Colonic mucosa (tissue), 4 donors: ENCODE measurements at regions of chr7 and their contacts with region 1.

Region 1: DNA sequence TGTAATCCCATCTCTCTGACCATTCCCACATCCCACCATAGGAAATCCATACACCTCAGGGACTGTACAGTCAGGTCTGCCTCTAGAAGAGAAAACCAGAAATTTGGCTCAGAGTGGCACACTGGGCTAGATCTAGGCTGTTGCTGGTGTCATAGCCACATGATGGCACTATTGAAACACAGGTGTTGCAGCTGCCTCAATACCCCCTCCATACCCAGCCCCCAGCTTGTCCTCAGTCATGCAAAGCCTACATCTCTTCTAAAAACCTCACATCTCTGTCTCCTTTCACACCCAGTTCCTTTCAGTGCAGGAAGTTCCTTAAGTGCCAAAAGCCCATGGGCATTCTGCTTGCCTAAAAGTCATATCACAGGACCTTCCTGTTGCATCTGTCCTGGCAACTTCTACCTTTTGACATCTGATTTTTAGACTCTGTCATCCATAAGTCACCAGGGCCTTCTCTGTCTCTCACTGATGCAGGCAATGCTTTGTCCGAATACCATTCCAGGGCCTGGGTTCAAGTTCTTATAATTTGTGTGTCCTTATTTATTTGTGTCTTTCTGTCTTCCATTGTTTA is 27.0 kb upstream of the HIBADH start:
- DNase-seq: peak; percentile 25
- H3K4me3 ChIP-seq: no peak overlapping the region
- H3K27ac ChIP-seq: no peak overlapping the region
- H3K4me1 ChIP-seq: no peaks in the 10 kb centered on the region
- H3K27me3 ChIP-seq: no peaks in the 10 kb centered on the region
- CTCF ChIP-seq: peak; percentile 32

Region 2: DNA sequence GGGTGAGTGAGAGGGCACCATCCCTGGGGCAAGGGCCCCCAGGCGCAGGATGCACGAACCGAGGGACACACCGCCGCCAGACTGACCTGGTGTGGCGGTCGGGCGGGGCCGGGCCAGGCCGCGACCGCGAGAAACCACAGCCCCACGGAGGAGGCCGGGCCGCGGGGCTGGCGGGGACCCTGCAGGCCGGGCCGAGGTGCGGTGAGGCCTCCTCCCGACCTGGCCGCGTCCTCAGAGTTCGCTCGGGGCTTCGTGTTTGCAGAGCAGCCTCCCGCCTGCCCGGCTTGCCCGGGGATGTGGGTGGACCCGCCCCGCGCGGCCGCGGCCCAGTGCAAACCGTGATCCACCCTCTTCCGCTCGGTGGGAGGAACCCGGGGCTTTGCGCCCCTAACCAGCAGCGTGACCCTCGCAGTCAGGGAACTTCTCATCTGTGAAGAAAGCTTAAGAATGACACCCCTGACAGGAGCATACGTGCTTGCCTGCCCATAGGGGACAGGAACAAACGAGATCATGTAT is 469.2 kb before region 1 on chr7:
- intact Hi-C with region 1: no loop called
- DNase-seq: no peak
- H3K4me3 ChIP-seq: no peak overlapping the region
- H3K27ac ChIP-seq: no peak overlapping the region
- H3K4me1 ChIP-seq: no peaks in the 10 kb centered on the region
- H3K27me3 ChIP-seq: peaks cover 14% of the 10 kb centered on the region
- CTCF ChIP-seq: no peak

Region 3: GRCh38 chr7:27459021-27459730 is 230.5 kb before region 1 on chr7:
- intact Hi-C with region 1: no loop called
- DNase-seq: no peak
- H3K4me3 ChIP-seq: no peak overlapping the region
- H3K27ac ChIP-seq: no peak overlapping the region
- H3K4me1 ChIP-seq: no peaks in the 10 kb centered on the region
- H3K27me3 ChIP-seq: no peaks in the 10 kb centered on the region
- CTCF ChIP-seq: no peak

Region 4: GRCh38 chr7:27774717-27775328 is 85.1 kb after region 1 on chr7:
- intact Hi-C with region 1: loop called (anchors 10 kb)
- DNase-seq: no peak
- H3K4me3 ChIP-seq: no peak overlapping the region
- H3K27ac ChIP-seq: no peak overlapping the region
- H3K4me1 ChIP-seq: no peaks in the 10 kb centered on the region
- H3K27me3 ChIP-seq: no peaks in the 10 kb centered on the region
- CTCF ChIP-seq: peak; percentile 52

Region 5: DNA sequence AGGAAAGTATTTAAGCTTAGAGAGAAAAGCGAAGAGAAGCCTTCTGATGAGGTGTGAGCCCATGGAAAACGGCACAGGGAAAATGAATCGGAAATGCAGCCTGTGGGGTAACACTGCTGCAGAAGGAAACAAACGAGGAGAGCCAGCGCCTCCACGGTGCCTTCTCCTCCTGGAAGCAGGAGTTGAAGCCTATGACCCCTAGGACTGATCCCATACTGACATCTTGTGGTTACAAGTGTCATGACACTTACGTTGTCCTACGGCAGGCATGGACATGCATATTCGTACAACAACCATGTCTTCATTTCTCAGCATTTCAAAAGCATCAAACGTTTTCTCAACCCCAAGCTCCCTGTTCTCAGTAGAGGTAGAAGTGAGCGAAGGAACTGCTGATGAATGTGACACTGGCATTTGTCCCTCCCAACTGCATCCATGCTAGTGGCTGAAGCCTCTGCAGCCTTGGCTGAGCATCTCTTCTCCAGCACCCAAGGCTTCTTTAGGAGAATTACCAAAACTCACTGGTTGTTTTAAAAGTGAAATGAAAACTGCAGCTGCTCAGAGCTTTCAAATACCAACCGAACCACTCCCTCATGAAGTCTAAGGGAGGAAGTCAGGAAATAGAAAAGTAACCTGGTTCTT is 330.7 kb after region 1 on chr7:
- intact Hi-C with region 1: loop called (anchors 5 kb)
- DNase-seq: peak; percentile 67
- H3K4me3 ChIP-seq: no peak overlapping the region
- H3K27ac ChIP-seq: no peak overlapping the region
- H3K4me1 ChIP-seq: no peaks in the 10 kb centered on the region
- H3K27me3 ChIP-seq: no peaks in the 10 kb centered on the region
- CTCF ChIP-seq: peak; percentile 82